Posterior cingulate gyrus (tissue), 11 donors: ENCODE measurements at regions of chr4 and their contacts with region 1.

Region 1: GRCh38 chr4:62709618-62710252 is 1509.6 kb downstream of the ADGRL3 start:
- DNase-seq: no peak

Region 2: DNA sequence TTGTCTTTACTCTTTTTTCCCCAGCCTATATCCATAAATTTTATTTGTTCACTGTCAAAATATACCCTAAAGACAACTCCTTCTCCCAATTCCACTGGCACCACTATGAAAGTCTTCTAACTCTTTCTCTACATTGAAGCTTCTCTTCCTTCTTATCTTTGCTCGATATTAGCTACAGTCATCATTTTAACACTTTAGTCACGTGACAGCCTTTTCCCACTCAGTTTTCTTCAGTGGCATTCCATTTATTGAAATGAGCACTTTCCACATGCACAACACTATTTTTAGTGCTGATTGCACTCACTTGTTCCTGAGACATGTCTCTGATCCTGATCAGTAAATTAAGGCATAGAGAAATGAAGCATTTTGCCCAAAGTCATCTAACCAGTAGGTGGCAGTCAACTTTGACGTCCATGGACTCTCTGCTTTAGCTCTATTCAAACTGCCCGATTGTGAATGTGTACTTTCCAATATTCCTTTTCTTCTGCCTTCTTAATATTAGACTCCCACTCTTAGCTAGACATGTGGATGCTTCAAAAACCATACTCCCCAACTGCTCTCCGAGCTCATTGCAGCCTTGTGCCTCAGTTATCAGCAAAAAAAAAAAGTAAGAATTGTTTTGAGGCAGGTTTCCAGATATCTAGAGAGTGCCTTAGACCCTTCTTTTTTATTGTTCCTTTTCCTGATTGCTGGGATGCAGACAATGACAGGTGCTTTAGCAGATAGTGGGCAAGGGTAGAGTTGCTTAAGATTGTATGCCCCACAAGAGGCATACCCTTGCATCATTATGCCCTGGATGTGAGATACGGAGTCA is 1904.0 kb before region 1 on chr4:
- intact Hi-C with region 1: loop called (anchors 5 kb)
- DNase-seq: no peak

Region 3: GRCh38 chr4:63085091-63085490 is 375.4 kb after region 1 on chr4:
- intact Hi-C with region 1: no loop called
- DNase-seq: no peak

Region 4: DNA sequence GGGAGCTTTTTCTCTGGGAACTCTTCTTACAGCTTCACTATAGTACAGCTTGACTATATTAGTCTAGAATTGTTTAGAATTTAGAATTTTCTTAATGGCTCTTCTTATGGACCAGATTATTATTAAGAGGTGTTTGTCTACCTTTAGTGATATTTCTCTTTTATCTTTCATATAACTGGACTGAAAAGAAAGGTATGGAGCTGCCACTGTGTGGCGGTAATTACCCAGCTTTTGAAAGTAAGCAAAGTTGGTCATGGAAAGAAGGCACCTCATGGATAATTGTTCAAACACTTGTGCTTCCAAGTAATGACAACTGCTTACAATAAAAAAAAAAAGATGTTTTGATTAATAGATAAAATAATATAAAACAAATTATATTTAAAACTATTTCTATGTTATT is 587.0 kb after region 1 on chr4:
- intact Hi-C with region 1: no loop called
- DNase-seq: no peak